ENCODE measurements at regions of chr1 and their contacts with region 1.

Region 1: GRCh38 chr1:211133836-211134669 is at the start of gene KCNH1:
- DNase-seq: peak; percentile 51 to 78
- ATAC-seq: peak; percentile 91 to 98 (median 94)
- H3K4me3 ChIP-seq: peak within 1 kb of the TSS in 9 of 10 donors; percentile 29 to 49 (median 47)
- H3K27ac ChIP-seq: no peak within 1 kb of the TSS
- H3K4me1 ChIP-seq: peaks cover 3 to 18% (median 13%) of the 10 kb centered on the region in 9 donors
- H3K27me3 ChIP-seq: peaks cover 0 to 90% (median 72%) of the 10 kb centered on the region in 7 donors
- CTCF ChIP-seq: peak; percentile 76 to 95 (median 89)
- total RNA-seq, gene KCNH1: 0.09 TPM in 1 of 10 donors, not detected in the others

Region 2: DNA sequence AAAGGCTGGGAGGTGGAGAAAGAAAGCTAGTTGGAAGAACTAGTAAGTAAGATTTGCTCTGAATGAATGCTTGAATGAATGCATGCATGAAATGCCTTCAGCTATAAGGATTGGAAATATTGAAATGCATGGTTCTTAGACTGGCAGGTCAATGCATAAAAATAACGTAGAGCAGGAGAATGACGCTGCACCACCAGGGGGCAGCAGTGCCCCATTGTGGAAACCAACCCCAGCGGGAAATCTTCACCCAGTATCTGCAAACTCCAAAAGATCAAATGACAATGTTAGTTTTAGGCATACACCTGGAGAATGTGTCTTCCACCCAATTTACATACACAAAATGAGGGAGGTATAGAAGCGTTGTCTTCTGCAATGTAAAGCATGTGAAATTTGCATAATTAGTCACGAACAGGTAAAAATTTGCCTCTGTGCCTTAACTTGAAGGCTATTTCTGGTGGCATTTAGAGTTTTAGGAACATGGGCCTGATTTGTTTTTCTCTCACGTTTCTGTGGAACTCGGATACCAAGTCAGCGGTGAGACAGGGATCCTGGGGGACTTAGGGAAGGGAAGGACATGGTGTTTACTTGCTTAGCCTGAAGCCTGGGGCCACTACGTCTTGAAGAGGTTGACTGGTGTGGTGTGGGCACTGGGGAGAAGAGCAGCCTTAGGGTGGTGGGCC is 726.7 kb before region 1 on chr1:
- intact Hi-C with region 1: loop called (anchors 1 to 10 kb)
- DNase-seq: peak; percentile 47 to 67
- ATAC-seq: peak in 4 of 8 donors; percentile 45 to 62 (median 46)
- H3K4me3 ChIP-seq: no peak overlapping the region
- H3K27ac ChIP-seq: no peak overlapping the region
- H3K4me1 ChIP-seq: no peaks in the 10 kb centered on the region
- H3K27me3 ChIP-seq: no peaks in the 10 kb centered on the region
- CTCF ChIP-seq: peak; percentile 88 to 98 (median 95)

Region 3: DNA sequence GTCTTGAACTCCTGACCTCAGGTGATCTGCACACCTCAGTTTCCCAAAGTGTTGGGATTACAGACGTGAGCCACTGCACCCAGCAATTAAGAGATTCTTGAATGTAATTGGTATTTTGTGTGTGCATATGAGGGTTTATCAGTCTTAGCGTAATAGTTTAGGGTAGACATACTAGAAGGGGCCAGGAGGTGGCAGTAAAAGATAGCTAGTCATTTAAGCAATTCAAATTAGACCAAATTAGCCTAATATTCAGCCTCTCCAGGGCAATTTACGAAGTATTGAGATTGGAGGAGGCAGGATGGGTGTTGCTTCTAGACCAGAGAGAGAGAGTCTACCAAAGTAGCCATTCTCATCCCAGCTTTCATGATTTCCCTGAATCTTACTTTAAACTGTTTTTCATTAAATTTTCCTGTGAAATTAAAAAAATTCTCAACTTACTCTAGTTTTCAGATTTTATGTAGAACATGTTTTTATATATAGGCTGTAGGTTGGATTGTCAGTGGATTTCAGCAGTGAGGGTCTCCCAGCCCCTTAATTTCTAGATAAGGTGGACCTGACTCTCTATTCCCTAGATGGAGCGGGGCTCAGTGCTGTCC is 685.7 kb before region 1 on chr1:
- intact Hi-C with region 1: loop called (anchors 1 to 10 kb)
- DNase-seq: peak in 1 of 2 donors; percentile 10
- ATAC-seq: peak in 1 of 8 donors; percentile 27
- H3K4me3 ChIP-seq: no peak overlapping the region
- H3K27ac ChIP-seq: no peak overlapping the region
- H3K4me1 ChIP-seq: no peaks in the 10 kb centered on the region
- H3K27me3 ChIP-seq: no peaks in the 10 kb centered on the region
- CTCF ChIP-seq: peak; percentile 17 to 70 (median 55)

Region 4: GRCh38 chr1:210584439-210585113 is 549.5 kb before region 1 on chr1:
- intact Hi-C with region 1: loop called in 9 of 10 experiments (anchors 1 to 5 kb)
- DNase-seq: peak; percentile 71 to 77
- ATAC-seq: peak; percentile 69 to 91 (median 80)
- H3K4me3 ChIP-seq: no peak overlapping the region
- H3K27ac ChIP-seq: no peak overlapping the region
- H3K4me1 ChIP-seq: no peaks in the 10 kb centered on the region
- H3K27me3 ChIP-seq: no peaks in the 10 kb centered on the region
- CTCF ChIP-seq: peak; percentile 29 to 77 (median 65)

Region 5: DNA sequence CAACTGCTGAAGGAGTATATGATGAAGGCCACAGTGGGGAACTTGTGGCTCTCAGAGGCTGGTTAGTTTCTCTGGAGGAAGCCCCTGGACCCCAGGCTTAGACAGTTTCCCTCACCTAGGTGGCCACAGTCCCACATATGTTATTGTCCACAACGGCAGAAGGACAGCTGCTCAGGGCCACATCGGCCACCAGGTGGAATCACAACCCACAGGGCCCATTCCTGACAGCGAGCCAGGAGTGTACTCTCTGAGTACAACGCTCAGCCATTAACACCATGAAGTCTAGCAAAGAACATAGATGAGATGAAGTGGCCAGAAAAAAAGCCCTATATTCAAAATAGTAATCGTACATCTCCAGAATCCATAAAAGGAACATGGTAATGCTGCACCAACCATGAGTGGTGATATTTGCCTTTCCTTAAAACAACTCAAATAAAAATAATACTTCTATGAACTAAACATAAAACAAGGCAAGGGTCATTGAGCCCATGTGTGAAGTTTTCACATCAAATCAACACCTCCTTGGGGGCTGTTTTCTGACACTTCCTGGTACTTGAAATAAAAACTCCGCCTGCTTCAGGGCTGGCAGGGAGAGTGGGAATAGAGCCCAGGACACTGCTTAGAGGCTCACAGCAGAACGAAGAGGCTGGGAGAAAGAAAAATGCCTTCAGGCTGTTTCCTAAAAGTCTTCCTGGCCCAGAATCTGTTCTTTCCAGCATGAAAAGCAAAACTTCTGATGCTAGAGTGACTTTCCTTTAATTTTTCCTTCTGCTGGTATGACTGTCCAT is 422.0 kb before region 1 on chr1:
- intact Hi-C with region 1: loop called in 2 of 10 experiments (anchors 5 to 10 kb)
- DNase-seq: peak in 1 of 2 donors; percentile 19
- ATAC-seq: peak in 1 of 8 donors; percentile 70
- H3K4me3 ChIP-seq: no peak overlapping the region
- H3K27ac ChIP-seq: no peak overlapping the region
- H3K4me1 ChIP-seq: no peaks in the 10 kb centered on the region
- H3K27me3 ChIP-seq: no peaks in the 10 kb centered on the region
- CTCF ChIP-seq: peak in 3 of 9 donors; percentile 6 to 23 (median 12)

Region 6: DNA sequence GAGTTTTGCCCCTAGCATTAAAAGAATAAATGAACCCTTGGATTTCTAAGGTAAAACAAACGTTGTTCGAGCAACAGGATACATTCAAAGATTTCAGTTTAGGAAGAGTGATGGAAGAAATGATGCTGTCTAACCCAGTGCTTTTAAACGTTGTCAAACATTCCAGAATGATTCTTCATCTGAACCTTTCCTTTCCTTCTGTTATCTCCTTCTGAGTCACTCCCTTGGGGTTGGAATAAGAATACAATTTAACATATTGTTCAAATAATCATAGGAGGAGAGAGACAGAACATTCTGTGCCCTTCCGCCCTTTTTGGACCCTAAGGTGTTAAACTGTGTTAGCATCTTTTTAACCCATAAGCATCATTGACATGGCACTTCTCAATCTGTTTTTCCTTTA is 64.1 kb after region 1 on chr1:
- intact Hi-C with region 1: loop called in 1 of 10 experiments (anchors 10 kb)
- DNase-seq: no peak
- ATAC-seq: no peak
- H3K4me3 ChIP-seq: no peak overlapping the region
- H3K27ac ChIP-seq: no peak overlapping the region
- H3K4me1 ChIP-seq: no peaks in the 10 kb centered on the region
- H3K27me3 ChIP-seq: peaks cover 0 to 10% (median 4%) of the 10 kb centered on the region in 7 donors
- CTCF ChIP-seq: no peak

Measured in heart right ventricle (tissue), 16 donors.